PC-3 (cell line): ENCODE measurements at regions of chr4 and their contacts with region 1.

Region 1: DNA sequence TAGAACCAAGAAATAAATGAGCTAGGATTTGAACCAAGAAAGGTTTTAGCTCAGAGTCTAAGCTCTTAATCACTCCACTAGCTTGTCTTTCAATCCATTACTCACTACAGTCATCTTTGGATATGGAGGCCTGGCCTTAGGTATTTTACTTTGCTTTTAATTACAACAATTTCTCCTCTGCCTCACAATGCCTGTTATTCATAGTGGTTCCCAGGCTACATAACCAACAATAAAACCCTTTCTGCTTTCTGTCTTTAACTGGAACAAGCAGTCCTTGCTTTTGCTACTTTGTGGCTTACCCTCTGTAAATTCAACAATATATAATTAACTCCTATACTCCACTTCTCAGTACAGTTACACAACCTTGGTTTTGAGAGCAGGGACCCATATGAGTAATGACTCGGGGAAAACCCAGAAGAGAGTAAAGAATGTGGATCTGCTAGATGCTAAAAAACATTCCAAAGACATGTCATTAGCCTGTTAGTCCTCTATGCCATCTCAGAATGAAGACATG is 94.7 kb upstream of the NAP1L5 start:
- DNase-seq: peak; percentile 63
- ATAC-seq: peak; percentile 55
- H3K4me3 ChIP-seq: no peak overlapping the region
- H3K27ac ChIP-seq: peak overlapping the region; percentile 7
- H3K4me1 ChIP-seq: peaks cover 26% of the 10 kb centered on the region
- H3K27me3 ChIP-seq: no peaks in the 10 kb centered on the region
- CTCF ChIP-seq: no peak

Region 2: DNA sequence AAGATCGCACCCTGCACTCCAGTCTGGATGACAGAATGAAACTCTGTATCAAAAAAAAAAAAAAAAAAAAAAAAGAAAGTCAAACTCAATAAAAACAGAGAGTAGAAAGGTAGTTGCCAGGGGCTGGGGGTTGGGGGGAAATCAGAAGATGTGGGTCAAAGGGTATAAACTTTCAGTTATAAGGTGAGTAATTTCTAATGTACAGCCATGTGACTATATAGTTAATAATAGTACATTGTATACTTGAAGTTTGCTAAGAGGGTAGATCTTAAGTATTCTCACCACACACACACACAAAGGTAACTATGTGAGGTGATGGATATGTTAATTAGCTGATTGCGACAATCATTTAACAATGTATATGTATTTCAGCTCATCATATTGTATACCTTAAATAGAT is 402.2 kb before region 1 on chr4:
- CTCF ChIA-PET with region 1: no interaction called
- POLR2A ChIA-PET with region 1: no interaction called
- intact Hi-C with region 1: no loop called
- DNase-seq: no peak
- ATAC-seq: no peak
- H3K4me3 ChIP-seq: no peak overlapping the region
- H3K27ac ChIP-seq: no peak overlapping the region
- H3K4me1 ChIP-seq: no peaks in the 10 kb centered on the region
- H3K27me3 ChIP-seq: no peaks in the 10 kb centered on the region
- CTCF ChIP-seq: no peak

Region 3: GRCh38 chr4:88523325-88524129 is 268.8 kb before region 1 on chr4 and contains the start of gene PYURF:
- CTCF ChIA-PET with region 1: no interaction called
- POLR2A ChIA-PET with region 1: interaction called, 6 read pairs
- intact Hi-C with region 1: loop called (anchors 5 kb)
- DNase-seq: peak; percentile 87
- ATAC-seq: peak; percentile 93
- H3K4me3 ChIP-seq: peak within 1 kb of the TSS; percentile 99
- H3K27ac ChIP-seq: peak within 1 kb of the TSS; percentile 62
- H3K4me1 ChIP-seq: peaks cover 42% of the 10 kb centered on the region
- H3K27me3 ChIP-seq: no peaks in the 10 kb centered on the region
- CTCF ChIP-seq: no peak
- total RNA-seq, gene PYURF: 143 and 159 TPM in 2 replicates